K562 (cell line): ENCODE measurements at regions of chr1 and their contacts with region 1.

Region 1: DNA sequence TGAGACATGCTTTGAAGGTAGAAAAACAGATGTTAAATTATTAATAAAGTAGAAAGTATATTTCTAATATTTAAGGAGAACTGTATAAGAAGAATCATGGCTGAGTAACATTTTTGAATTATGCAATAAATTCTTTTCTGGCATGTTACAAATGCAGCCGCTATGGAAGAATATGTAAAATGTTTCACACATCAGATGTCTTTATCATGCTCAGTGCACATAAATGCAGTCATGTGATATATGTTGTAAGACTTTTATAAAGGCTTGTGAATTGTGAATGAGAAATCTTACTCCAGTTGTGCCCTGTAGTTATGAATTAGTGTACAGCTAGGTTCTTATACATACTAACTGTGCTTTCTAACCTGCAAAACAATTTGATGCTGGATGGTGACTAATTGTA is 53.5 kb downstream of the LRRC8B start:
- DNase-seq: no peak
- ATAC-seq: no peak
- H3K4me3 ChIP-seq: no peak overlapping the region
- H3K27ac ChIP-seq: no peak overlapping the region
- H3K4me1 ChIP-seq: no peaks in the 10 kb centered on the region
- H3K27me3 ChIP-seq: no peaks in the 10 kb centered on the region
- CTCF ChIP-seq: no peak
- EP300 ChIP-seq: no peak
- POLR2A ChIP-seq: no peak
- RAD21 ChIP-seq: no peak

Region 2: GRCh38 chr1:89381618-89382017 is 196.5 kb before region 1 on chr1:
- CTCF ChIA-PET with region 1: no interaction called
- POLR2A ChIA-PET with region 1: no interaction called
- in situ Hi-C with region 1: no loop called
- intact Hi-C with region 1: no loop called
- DNase-seq: peak in 1 of 4 experiments; percentile 15
- ATAC-seq: peak; percentile 76
- H3K4me3 ChIP-seq: no peak overlapping the region
- H3K27ac ChIP-seq: no peak overlapping the region
- H3K4me1 ChIP-seq: no peaks in the 10 kb centered on the region
- H3K27me3 ChIP-seq: no peaks in the 10 kb centered on the region
- CTCF ChIP-seq: 0 out of 6 replicates have a peak, but pooled peaks of 2 of the 3 experiments have one; percentile 10 to 17
- EP300 ChIP-seq: no peak
- POLR2A ChIP-seq: no peak
- RAD21 ChIP-seq: no peak

Region 3: DNA sequence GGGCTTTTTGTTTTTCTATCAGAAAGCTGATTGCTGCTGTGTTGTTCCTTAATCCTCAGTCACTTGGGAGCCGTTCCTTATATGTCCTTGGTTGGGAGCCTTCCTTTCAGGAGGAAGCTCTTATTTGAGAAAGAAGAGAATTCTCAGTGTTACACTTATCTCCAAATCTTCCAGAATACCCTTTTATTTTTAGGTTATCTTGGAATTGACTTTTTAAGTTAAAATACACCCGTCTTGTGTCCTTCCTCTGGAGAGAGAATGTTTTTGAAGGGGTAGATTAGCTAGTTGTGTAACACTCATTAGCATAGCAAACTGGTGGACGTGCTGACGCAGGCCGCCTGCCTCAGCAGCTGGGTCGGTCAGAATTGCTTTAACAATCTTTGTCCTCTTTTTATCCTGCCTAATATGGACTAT is 11.4 kb before region 1 on chr1:
- CTCF ChIA-PET with region 1: no interaction called
- POLR2A ChIA-PET with region 1: interaction called, 12 read pairs
- in situ Hi-C with region 1: no loop called
- intact Hi-C with region 1: no loop called
- DNase-seq: peak in 2 of 4 experiments; percentile 33 to 44
- ATAC-seq: peak; percentile 87
- H3K4me3 ChIP-seq: no peak overlapping the region
- H3K27ac ChIP-seq: peak overlapping the region; percentile 16; the same call in 2 of the 3 replicates
- H3K4me1 ChIP-seq: peaks cover 0 to 14% of the 10 kb centered on the region in 2 experiments; a peak in 3 of 5 replicates
- H3K27me3 ChIP-seq: no peaks in the 10 kb centered on the region
- CTCF ChIP-seq: no peak
- EP300 ChIP-seq: no peak
- POLR2A ChIP-seq: no peak
- RAD21 ChIP-seq: no peak

Region 4: GRCh38 chr1:89743788-89744187 is 165.6 kb after region 1 on chr1:
- CTCF ChIA-PET with region 1: no interaction called
- POLR2A ChIA-PET with region 1: no interaction called
- in situ Hi-C with region 1: no loop called
- intact Hi-C with region 1: no loop called
- DNase-seq: no peak
- ATAC-seq: no peak
- H3K4me3 ChIP-seq: no peak overlapping the region
- H3K27ac ChIP-seq: no peak overlapping the region
- H3K4me1 ChIP-seq: peaks cover 4 to 5% of the 10 kb centered on the region in 2 experiments; a peak in 2 of 5 replicates
- H3K27me3 ChIP-seq: no peaks in the 10 kb centered on the region
- CTCF ChIP-seq: no peak
- EP300 ChIP-seq: no peak
- POLR2A ChIP-seq: no peak
- RAD21 ChIP-seq: no peak

Region 5: GRCh38 chr1:89771991-89772560 is 193.9 kb after region 1 on chr1:
- CTCF ChIA-PET with region 1: no interaction called
- POLR2A ChIA-PET with region 1: no interaction called
- in situ Hi-C with region 1: no loop called
- intact Hi-C with region 1: no loop called
- DNase-seq: peak in 1 of 4 experiments; percentile 22
- ATAC-seq: peak; percentile 84
- H3K4me3 ChIP-seq: no peak overlapping the region
- H3K27ac ChIP-seq: no peak overlapping the region
- H3K4me1 ChIP-seq: no peaks in the 10 kb centered on the region
- H3K27me3 ChIP-seq: no peaks in the 10 kb centered on the region; a peak in 1 of 5 replicates
- CTCF ChIP-seq: no peak
- EP300 ChIP-seq: no peak
- POLR2A ChIP-seq: no peak
- RAD21 ChIP-seq: no peak

Region 6: GRCh38 chr1:90902672-90903071 is 1324.5 kb after region 1 on chr1:
- CTCF ChIA-PET with region 1: no interaction called
- POLR2A ChIA-PET with region 1: no interaction called
- in situ Hi-C with region 1: loop called (anchors 10 kb)
- intact Hi-C with region 1: no loop called
- DNase-seq: peak in 2 of 4 experiments; percentile 18 to 19
- ATAC-seq: peak; percentile 55
- H3K4me3 ChIP-seq: no peak overlapping the region
- H3K27ac ChIP-seq: no peak overlapping the region
- H3K4me1 ChIP-seq: no peaks in the 10 kb centered on the region
- H3K27me3 ChIP-seq: no peaks in the 10 kb centered on the region
- CTCF ChIP-seq: no peak
- EP300 ChIP-seq: no peak
- POLR2A ChIP-seq: no peak
- RAD21 ChIP-seq: no peak